ENCODE measurements at regions of chr11 and their contacts with region 1.

Region 1: DNA sequence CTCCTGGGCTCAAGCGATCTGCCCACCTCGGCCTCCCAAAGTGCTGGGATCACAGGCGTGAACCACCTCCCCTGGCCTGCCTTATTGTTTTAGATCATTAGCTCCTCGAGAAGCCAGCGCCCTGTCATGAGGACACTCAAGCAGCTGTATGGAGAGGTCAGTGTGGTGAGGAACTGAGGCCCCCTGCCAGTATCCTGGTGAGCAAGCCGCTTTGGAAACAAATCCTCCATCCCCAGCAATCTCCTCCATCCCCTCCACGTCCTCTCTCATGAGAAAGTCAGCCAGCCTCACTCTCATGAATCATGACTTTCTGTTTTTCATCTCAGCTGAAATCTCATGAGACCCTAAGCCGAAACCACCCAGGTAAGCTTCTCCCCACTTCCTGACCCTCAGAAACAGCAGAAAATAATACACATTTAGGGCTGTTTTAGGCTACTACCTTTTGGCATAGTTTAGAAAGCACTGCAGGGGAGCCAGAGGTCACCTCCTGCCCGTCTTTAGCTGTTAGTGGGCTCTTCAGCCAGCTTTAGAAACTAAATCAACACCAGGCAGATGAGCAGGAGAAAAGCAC is 56.0 kb downstream of the CTTN start:
- DNase-seq: no peak
- H3K4me3 ChIP-seq: no peak overlapping the region
- H3K27me3 ChIP-seq: no peaks in the 10 kb centered on the region
- CTCF ChIP-seq: no peak

Region 2: DNA sequence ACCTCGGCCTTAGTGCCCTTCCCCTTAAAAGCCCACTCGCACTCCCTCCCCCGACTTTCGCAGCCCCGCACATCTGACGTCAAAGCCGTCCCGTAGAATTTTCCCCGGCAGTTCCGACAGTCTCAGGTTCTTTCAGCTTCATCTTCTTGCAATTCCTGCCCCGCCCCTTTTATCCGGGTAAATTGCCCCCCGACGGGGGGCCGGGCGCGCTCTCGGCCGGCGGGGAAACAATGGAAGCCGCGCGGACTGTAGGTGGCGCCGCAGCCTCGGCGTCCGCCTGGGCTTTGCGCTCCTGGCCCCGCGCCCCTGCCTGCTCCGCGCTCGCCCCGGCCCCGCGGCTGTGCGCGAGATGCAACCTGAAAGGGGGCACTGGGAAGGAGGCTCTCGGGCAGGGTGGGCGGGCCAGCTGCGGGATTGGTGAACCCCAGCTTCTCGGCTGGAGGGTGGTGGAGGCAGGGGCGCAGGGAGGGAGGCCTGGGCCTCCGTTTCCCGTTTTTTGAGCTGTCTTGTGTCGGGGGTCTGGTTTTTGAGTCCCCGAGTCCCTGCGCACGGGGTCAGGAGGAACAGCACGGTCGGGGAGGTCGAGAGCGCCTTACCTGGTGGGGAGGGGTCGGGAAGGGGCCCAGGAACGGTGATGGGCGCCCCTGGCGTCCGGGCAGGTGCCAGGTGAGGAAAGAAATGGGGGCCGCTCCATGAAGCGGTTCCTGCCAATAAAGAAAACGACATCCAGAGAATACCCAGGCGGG is 749.6 kb before region 1 on chr11:
- CTCF ChIA-PET with region 1: no interaction called
- POLR2A ChIA-PET with region 1: interaction called, 13 read pairs
- DNase-seq: no peak
- H3K4me3 ChIP-seq: no peak overlapping the region
- H3K27me3 ChIP-seq: peaks cover 43% of the 10 kb centered on the region
- CTCF ChIP-seq: peak; percentile 49

Region 3: DNA sequence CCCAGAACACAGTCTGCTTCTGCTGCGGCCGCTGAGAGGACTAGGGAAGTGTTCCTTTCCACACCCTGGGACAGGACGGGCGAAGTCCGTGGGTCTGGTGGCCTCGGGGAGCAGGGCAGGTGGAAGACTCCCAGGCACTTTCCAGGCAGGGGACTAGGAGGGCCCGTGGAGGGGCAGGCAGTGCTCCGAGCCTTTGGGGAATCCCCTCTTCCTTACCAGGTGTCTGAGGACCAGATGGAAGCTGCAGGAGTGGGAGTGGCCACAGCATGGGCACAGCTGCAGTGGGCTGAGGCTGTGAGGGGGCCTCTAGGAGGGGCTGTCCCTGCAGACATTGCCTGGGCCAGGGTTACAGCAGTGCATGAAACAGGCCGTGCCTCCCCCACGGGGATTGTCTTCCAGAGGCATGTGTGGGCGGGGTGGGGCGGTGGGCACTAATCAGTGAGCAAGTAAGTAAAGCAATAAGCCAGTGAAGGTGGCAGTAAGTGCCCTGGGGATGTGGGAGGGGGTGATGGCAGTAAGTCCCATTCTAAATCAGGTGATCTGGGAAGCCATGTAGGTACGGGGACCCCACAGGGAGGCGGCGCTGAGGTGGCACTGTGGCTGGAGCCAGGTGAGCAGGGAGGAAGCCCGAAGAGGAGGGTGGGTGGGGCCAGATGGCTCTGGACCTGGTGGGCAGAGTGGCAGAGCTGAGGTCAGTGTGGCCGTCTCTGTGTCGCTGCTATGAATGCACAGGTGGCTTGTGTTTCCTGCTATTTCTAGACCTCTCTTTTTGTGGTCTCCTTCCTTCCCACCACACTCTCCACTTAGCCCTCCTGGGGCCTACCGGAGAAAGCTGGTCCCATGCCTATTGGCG is 10.5 kb after region 1 on chr11:
- CTCF ChIA-PET with region 1: no interaction called
- POLR2A ChIA-PET with region 1: no interaction called
- DNase-seq: no peak
- H3K4me3 ChIP-seq: no peak overlapping the region
- H3K27me3 ChIP-seq: peaks cover 1% of the 10 kb centered on the region; the same call in 1 of the 2 replicates
- CTCF ChIP-seq: no peak